Heart right ventricle (tissue), 16 donors: ENCODE measurements at regions of chr6 and their contacts with region 1.

Region 1: GRCh38 chr6:39426088-39426456 is 103.6 kb upstream of the KCNK16 start:
- DNase-seq: no peak
- ATAC-seq: peak in 3 of 8 donors; percentile 31 to 43 (median 38)
- H3K4me3 ChIP-seq: no peak overlapping the region
- H3K27ac ChIP-seq: no peak overlapping the region
- H3K4me1 ChIP-seq: peaks cover 0 to 31% (median 11%) of the 10 kb centered on the region in 9 donors
- H3K27me3 ChIP-seq: no peaks in the 10 kb centered on the region
- CTCF ChIP-seq: no peak

Region 2: DNA sequence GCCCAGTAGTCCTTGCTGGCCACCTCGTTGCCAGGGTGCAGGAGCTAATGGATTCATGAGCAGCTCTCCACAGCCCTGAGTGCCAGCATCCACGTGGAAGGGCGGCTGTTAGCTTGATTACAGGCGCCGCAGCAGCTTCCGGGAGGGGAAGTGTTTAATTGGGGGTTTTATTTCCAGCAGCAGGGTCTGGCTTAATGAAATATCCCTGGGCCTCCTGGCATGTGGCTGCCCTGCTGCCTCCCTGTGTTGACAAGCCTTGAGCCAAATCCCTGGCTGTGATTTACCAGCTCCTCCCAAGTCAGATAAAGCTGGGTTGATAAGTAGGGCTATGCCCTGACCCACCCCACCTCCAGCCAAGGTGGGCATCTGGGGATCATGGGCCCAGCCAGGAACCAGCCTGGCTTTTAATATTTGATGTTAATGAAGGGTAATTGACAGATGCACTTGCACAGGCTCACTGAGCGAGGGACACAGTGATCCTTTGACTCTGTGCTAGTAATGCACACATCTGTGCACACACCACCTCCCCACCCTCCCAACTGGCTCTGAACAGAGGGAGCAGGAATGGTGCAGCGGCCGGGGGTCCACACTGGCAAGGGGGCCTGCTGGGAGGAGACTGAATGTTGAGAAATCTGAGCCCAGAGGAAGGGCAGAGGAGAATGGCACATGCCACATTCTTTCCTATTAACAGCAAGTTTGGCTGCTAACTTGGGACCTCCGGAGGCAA is 363.9 kb before region 1 on chr6:
- intact Hi-C with region 1: no loop called
- DNase-seq: no peak
- ATAC-seq: peak in 6 of 8 donors; percentile 17 to 42 (median 30)
- H3K4me3 ChIP-seq: no peak overlapping the region
- H3K27ac ChIP-seq: peak overlapping the region in 5 of 10 donors; percentile 7 to 34 (median 15)
- H3K4me1 ChIP-seq: peaks cover 0 to 18% (median 11%) of the 10 kb centered on the region in 9 donors
- H3K27me3 ChIP-seq: peaks cover 0 to 17% (median 7%) of the 10 kb centered on the region in 7 donors
- CTCF ChIP-seq: no peak

Region 3: GRCh38 chr6:39143233-39143930 is 282.7 kb before region 1 on chr6:
- intact Hi-C with region 1: no loop called
- DNase-seq: no peak
- ATAC-seq: peak in 1 of 8 donors; percentile 26
- H3K4me3 ChIP-seq: no peak overlapping the region
- H3K27ac ChIP-seq: peak overlapping the region in 2 of 10 donors; percentile 28 to 58
- H3K4me1 ChIP-seq: peaks cover 0 to 11% (median 0%) of the 10 kb centered on the region in 9 donors
- H3K27me3 ChIP-seq: peaks cover 0 to 37% (median 13%) of the 10 kb centered on the region in 7 donors
- CTCF ChIP-seq: no peak

Region 4: DNA sequence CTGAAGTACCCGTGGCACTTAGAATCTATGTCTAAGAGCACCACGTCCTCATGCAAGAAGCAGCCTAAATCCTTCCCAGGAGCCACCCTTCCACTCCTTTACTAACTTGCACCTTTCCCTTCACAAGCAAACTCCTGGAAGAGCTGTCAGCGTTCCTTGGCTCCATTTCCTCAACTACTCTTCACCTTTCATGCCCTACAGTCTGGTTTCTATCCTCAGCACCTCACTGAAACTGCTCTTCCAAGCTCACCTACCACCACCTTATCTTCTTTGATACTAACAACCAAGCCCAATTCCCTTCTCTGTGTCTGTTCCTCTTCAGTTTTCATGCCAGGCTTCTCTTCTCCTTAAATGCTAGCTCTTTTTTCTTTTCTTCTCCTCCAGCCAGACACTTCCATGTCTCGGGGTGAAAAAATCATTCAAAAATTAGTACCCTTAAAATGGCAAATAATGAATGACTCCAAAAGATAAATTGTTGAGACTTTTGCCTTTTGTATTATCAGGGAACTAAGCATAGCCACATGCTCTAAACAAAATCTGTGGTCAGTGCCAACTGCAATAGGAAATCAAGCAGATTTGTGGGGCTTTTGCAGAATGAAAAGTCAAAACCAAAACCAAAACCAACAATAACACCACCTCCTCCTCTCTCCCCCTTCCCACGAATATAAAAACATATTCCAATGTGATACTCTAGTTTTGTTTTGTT is 46.0 kb after region 1 on chr6:
- intact Hi-C with region 1: loop called in 1 of 10 experiments (anchors 10 kb)
- DNase-seq: no peak
- ATAC-seq: no peak
- H3K4me3 ChIP-seq: no peak overlapping the region
- H3K27ac ChIP-seq: peak overlapping the region in 1 of 10 donors; percentile 7
- H3K4me1 ChIP-seq: peaks cover 0 to 18% (median 9%) of the 10 kb centered on the region in 9 donors
- H3K27me3 ChIP-seq: no peaks in the 10 kb centered on the region
- CTCF ChIP-seq: no peak

Region 5: GRCh38 chr6:39543095-39543494 is 117.0 kb after region 1 on chr6:
- intact Hi-C with region 1: loop called in 1 of 10 experiments (anchors 10 kb)
- DNase-seq: peak; percentile 28 to 53
- ATAC-seq: peak; percentile 83 to 98 (median 94)
- H3K4me3 ChIP-seq: no peak overlapping the region
- H3K27ac ChIP-seq: peak overlapping the region in 1 of 10 donors; percentile 38
- H3K4me1 ChIP-seq: peaks cover 0 to 33% (median 14%) of the 10 kb centered on the region in 9 donors
- H3K27me3 ChIP-seq: no peaks in the 10 kb centered on the region
- CTCF ChIP-seq: no peak